ENCODE measurements at regions of chr11 and their contacts with region 1.

Region 1: DNA sequence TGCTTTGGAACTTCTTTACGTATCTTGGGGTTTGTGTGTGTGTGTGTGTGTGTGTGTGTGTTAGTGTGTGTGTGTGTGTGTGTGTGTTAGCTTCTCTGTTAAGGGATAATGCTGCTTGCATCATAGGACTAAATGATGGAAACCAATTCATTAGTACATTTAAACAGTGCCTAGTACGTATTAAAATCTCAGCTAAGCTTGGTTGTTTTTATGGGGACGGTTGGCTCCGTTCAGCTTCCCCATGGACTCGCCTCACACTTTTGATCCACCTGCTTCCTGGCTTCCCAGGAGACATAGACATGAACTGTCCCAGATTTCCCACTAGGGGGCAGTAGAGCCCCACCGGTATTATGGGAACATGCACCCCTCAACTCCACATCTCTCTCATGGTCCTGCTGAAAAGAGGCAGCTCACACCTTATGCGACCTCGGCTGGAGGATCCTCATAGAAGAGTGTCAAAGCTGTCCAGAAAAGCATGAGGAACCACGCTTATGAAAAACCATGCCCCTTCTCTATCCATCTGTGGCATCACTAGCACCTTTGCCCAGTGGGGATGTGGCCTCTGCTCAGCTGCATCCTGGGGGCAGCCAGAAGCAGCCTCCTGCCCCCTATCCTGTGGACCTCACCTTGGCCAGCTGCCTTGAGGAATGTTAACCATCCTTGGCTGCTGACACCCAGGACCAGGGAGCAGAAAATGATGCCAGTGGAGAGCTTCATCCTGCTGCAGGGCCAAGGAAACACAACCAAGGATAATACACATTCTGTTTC is 9.7 kb upstream of the SAAL1 start:
- DNase-seq: peak; percentile 76
- ATAC-seq: peak; percentile 98
- H3K4me3 ChIP-seq: no peak overlapping the region; a peak in 1 of 4 replicates
- H3K27ac ChIP-seq: no peak overlapping the region
- H3K4me1 ChIP-seq: peaks cover 0 to 4% of the 10 kb centered on the region in 2 experiments; a peak in 2 of 4 replicates
- H3K27me3 ChIP-seq: peaks cover 22% of the 10 kb centered on the region
- CTCF ChIP-seq: peak; percentile 76 to 94 (median 86)
- POLR2A ChIP-seq: no peak
- RAD21 ChIP-seq: peak; percentile 90

Region 2: DNA sequence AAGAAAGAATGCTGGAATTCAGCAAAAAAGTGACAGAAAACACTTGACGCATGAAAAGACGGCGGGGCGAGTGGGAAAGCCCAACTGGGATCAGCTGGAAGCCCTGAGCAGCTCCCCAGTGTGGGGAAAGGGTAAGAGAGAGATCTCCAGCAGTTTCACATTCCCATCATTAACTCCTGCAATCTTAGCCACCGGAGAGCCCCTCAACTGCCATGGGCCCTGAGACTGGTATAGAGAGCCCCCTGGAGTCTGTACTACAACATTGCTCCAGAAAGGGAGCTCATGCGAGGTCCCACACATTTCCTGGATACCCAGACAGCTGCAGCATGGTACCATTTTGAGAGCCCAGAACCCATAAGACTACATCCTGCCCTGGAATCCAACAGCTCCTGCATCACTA is 88.2 kb after region 1 on chr11:
- CTCF ChIA-PET with region 1: interaction called, 40 read pairs
- POLR2A ChIA-PET with region 1: no interaction called
- RAD21 ChIA-PET with region 1: interaction called, 6 to 7 read pairs
- intact Hi-C with region 1: loop called (anchors 1 kb)
- DNase-seq: peak; percentile 8
- ATAC-seq: peak; percentile 99
- H3K4me3 ChIP-seq: no peak overlapping the region
- H3K27ac ChIP-seq: no peak overlapping the region
- H3K4me1 ChIP-seq: no peaks in the 10 kb centered on the region
- H3K27me3 ChIP-seq: no peaks in the 10 kb centered on the region
- CTCF ChIP-seq: peak; percentile 61 to 71 (median 67); a peak in 5 of 6 replicates
- POLR2A ChIP-seq: no peak
- RAD21 ChIP-seq: peak; percentile 68

Region 3: GRCh38 chr11:18304745-18305144 is 189.2 kb after region 1 on chr11:
- CTCF ChIA-PET with region 1: no interaction called
- POLR2A ChIA-PET with region 1: no interaction called
- RAD21 ChIA-PET with region 1: no interaction called
- intact Hi-C with region 1: loop called (anchors 10 kb)
- DNase-seq: no peak
- ATAC-seq: no peak
- H3K4me3 ChIP-seq: no peak overlapping the region
- H3K27ac ChIP-seq: no peak overlapping the region
- H3K4me1 ChIP-seq: no peaks in the 10 kb centered on the region
- H3K27me3 ChIP-seq: no peaks in the 10 kb centered on the region
- CTCF ChIP-seq: no peak
- POLR2A ChIP-seq: no peak
- RAD21 ChIP-seq: no peak

Region 4: DNA sequence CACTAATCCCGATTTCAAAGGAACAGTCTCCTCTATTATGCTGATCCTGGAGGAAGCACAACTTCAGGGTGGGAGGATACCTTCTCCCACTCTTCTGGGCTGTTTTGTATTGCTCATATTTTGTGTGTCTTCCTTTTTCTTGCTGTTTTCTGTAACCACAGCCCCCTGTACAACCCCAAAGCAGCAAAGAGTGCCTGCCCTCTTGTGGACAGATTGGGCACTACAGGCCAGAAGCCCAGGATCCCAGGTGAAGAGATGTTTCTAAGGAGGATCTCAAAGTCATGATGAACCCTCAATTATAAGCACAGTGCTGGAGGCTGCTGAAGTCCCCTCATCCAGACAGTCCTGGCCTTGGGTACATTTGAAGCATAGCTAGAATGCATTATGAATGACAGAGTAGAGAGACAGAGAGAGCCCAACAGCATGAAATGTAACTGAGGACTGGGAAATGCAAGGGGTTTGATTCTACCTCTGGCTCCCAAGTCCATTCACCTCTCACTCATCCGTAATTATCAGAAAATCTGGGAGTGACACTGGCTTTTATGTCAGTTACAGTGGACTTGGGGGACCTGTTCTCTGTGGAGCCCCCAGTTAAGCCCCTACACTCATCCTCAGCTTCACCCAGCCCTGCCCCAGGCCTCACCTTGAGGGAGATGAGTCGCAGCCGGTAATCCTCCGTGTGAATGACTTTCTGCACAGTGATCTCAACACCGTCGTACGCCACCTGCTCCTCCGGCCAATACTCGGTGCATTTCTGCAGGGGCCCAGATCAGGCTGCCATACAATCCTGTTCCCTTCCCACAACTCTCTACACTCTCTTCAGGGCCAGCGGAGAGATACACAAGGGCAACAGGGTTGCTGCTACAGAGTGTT is 616.6 kb after region 1 on chr11:
- CTCF ChIA-PET with region 1: interaction called, 6 read pairs
- POLR2A ChIA-PET with region 1: no interaction called
- RAD21 ChIA-PET with region 1: no interaction called
- intact Hi-C with region 1: loop called (anchors 1 kb)
- DNase-seq: peak; percentile 19
- ATAC-seq: peak; percentile 74
- H3K4me3 ChIP-seq: no peak overlapping the region
- H3K27ac ChIP-seq: no peak overlapping the region
- H3K4me1 ChIP-seq: peaks cover 0 to 7% of the 10 kb centered on the region in 2 experiments; a peak in 2 of 4 replicates
- H3K27me3 ChIP-seq: no peaks in the 10 kb centered on the region
- CTCF ChIP-seq: peak; percentile 80 to 99 (median 99)
- POLR2A ChIP-seq: no peak
- RAD21 ChIP-seq: peak; percentile 81

Region 5: GRCh38 chr11:18853086-18853720 is 737.7 kb after region 1 on chr11:
- CTCF ChIA-PET with region 1: no interaction called
- POLR2A ChIA-PET with region 1: no interaction called
- RAD21 ChIA-PET with region 1: no interaction called
- intact Hi-C with region 1: loop called (anchors 2 kb)
- DNase-seq: peak; percentile 21
- ATAC-seq: peak; percentile 96
- H3K4me3 ChIP-seq: no peak overlapping the region
- H3K27ac ChIP-seq: no peak overlapping the region
- H3K4me1 ChIP-seq: no peaks in the 10 kb centered on the region
- H3K27me3 ChIP-seq: peaks cover 45% of the 10 kb centered on the region
- CTCF ChIP-seq: peak; percentile 47 to 73 (median 62); a peak in 5 of 6 replicates
- POLR2A ChIP-seq: no peak
- RAD21 ChIP-seq: peak; percentile 75